ENCODE measurements at regions of chr6 and their contacts with region 1.

Region 1: GRCh38 chr6:108168501-108169463 is 3.0 kb downstream of the NR2E1 start:
- DNase-seq: peak; percentile 49
- ATAC-seq: peak; percentile 45
- H3K4me3 Mint-ChIP-seq: peak overlapping the region; percentile 57
- H3K27ac Mint-ChIP-seq: no peak overlapping the region
- H3K4me1 Mint-ChIP-seq: peaks cover 53% of the 10 kb centered on the region
- H3K27me3 Mint-ChIP-seq: peaks cover 76% of the 10 kb centered on the region
- CTCF ChIP-seq: no peak

Region 2: DNA sequence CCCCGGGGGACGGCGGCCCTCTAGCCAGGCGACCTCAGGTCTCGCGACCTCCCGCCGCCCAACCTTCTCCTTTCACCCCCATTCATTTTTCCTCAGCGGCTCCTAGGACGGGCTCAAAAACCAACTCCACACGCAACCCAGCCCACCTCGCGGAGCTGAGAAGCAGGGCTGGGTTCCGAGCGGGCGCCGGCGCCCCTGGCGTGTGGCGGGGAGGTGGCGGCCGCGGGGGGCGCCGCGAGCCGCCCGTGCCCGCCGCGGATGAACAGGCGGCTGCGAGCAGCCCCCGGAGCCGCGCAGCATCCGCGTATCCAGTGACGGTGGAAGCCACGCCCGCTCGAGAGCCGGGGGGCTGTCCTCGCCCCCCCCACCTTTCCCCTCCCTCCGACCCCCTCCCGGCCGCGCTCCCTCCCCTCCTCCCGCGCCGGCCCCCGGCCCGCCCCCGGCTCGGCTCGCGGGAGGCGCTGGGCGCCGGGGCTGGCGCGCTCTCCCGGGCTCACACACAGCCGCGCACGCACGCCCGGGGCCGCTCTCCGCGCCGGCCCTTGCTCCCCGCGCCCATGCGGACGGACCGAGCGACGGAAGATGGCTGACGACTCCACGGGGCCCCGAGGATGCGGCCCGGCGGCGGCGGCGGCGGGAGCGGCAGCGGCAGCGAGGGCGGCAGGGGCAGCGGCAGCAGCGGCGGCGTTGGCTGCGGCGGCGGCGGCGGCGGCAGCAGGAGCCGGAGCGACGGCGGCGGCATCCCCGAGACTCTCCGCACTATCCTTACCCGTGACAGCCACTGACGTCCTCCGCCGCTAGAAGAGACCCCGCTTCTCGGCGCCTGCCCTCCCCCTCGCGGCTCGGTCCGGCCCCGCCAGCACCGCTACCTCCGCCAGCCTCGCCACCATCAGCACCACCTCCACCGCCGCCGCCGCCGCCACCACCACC is 678.9 kb before region 1 on chr6 and contains the start of gene SOBP:
- CTCF ChIA-PET with region 1: no interaction called
- POLR2A ChIA-PET with region 1: no interaction called
- intact Hi-C with region 1: loop called (anchors 5 kb)
- DNase-seq: peak; percentile 58
- ATAC-seq: peak; percentile 60
- H3K4me3 Mint-ChIP-seq: peak within 1 kb of the TSS; percentile 90
- H3K27ac Mint-ChIP-seq: peak within 1 kb of the TSS; percentile 63
- H3K4me1 Mint-ChIP-seq: peaks cover 26% of the 10 kb centered on the region
- H3K27me3 Mint-ChIP-seq: peaks cover 28% of the 10 kb centered on the region
- CTCF ChIP-seq: no peak
- total RNA-seq, gene SOBP: 1.1 TPM in 2 replicates

Region 3: GRCh38 chr6:108020472-108021116 is 148.2 kb before region 1 on chr6:
- CTCF ChIA-PET with region 1: no interaction called
- POLR2A ChIA-PET with region 1: no interaction called
- intact Hi-C with region 1: no loop called
- DNase-seq: no peak
- ATAC-seq: no peak
- H3K4me3 Mint-ChIP-seq: no peak overlapping the region
- H3K27ac Mint-ChIP-seq: no peak overlapping the region
- H3K4me1 Mint-ChIP-seq: no peaks in the 10 kb centered on the region
- H3K27me3 Mint-ChIP-seq: no peaks in the 10 kb centered on the region
- CTCF ChIP-seq: no peak

Region 4: GRCh38 chr6:108157234-108157980 is 11.4 kb before region 1 on chr6:
- CTCF ChIA-PET with region 1: interaction called, 5 read pairs
- POLR2A ChIA-PET with region 1: interaction called, 4 read pairs
- intact Hi-C with region 1: loop called (anchors 1 kb)
- DNase-seq: peak; percentile 23
- ATAC-seq: no peak
- H3K4me3 Mint-ChIP-seq: peak overlapping the region; percentile 65
- H3K27ac Mint-ChIP-seq: no peak overlapping the region
- H3K4me1 Mint-ChIP-seq: peaks cover 15% of the 10 kb centered on the region
- H3K27me3 Mint-ChIP-seq: peaks cover 77% of the 10 kb centered on the region
- CTCF ChIP-seq: no peak

Region 5: DNA sequence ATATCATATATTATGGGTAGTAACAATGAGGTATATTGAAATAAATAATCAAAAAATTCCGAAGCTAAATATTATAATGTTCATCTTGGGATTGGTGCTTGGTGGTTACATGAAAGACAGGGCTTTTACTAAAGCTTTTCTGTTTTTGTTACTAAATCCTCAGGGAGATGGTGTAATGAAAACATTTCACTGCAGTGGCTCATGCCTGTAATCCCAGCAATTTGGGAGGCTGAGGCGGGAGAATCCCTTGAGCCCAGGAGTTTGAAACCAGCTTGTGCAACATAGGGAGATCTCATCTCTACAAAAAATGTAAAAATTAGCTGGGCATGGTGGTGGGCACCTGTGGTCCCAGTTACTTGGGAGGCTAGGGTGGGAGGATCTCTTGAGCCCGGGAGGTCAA is 168.9 kb after region 1 on chr6:
- CTCF ChIA-PET with region 1: no interaction called
- POLR2A ChIA-PET with region 1: no interaction called
- intact Hi-C with region 1: no loop called
- DNase-seq: no peak
- ATAC-seq: no peak
- H3K4me3 Mint-ChIP-seq: no peak overlapping the region
- H3K27ac Mint-ChIP-seq: no peak overlapping the region
- H3K4me1 Mint-ChIP-seq: peaks cover 19% of the 10 kb centered on the region
- H3K27me3 Mint-ChIP-seq: no peaks in the 10 kb centered on the region
- CTCF ChIP-seq: no peak

Region 6: GRCh38 chr6:108359901-108360882 is 191.4 kb after region 1 on chr6:
- CTCF ChIA-PET with region 1: no interaction called
- POLR2A ChIA-PET with region 1: no interaction called
- intact Hi-C with region 1: loop called (anchors 2 kb)
- DNase-seq: no peak
- ATAC-seq: peak; percentile 62
- H3K4me3 Mint-ChIP-seq: no peak overlapping the region
- H3K27ac Mint-ChIP-seq: no peak overlapping the region
- H3K4me1 Mint-ChIP-seq: peaks cover 7% of the 10 kb centered on the region
- H3K27me3 Mint-ChIP-seq: no peaks in the 10 kb centered on the region
- CTCF ChIP-seq: no peak

Region 7: GRCh38 chr6:108492131-108492766 is 323.5 kb after region 1 on chr6:
- CTCF ChIA-PET with region 1: interaction called, 12 read pairs
- POLR2A ChIA-PET with region 1: no interaction called
- intact Hi-C with region 1: loop called (anchors 5 kb)
- DNase-seq: no peak
- ATAC-seq: peak; percentile 40
- H3K4me3 Mint-ChIP-seq: no peak overlapping the region
- H3K27ac Mint-ChIP-seq: no peak overlapping the region
- H3K4me1 Mint-ChIP-seq: no peaks in the 10 kb centered on the region
- H3K27me3 Mint-ChIP-seq: no peaks in the 10 kb centered on the region
- CTCF ChIP-seq: no peak

Region 8: DNA sequence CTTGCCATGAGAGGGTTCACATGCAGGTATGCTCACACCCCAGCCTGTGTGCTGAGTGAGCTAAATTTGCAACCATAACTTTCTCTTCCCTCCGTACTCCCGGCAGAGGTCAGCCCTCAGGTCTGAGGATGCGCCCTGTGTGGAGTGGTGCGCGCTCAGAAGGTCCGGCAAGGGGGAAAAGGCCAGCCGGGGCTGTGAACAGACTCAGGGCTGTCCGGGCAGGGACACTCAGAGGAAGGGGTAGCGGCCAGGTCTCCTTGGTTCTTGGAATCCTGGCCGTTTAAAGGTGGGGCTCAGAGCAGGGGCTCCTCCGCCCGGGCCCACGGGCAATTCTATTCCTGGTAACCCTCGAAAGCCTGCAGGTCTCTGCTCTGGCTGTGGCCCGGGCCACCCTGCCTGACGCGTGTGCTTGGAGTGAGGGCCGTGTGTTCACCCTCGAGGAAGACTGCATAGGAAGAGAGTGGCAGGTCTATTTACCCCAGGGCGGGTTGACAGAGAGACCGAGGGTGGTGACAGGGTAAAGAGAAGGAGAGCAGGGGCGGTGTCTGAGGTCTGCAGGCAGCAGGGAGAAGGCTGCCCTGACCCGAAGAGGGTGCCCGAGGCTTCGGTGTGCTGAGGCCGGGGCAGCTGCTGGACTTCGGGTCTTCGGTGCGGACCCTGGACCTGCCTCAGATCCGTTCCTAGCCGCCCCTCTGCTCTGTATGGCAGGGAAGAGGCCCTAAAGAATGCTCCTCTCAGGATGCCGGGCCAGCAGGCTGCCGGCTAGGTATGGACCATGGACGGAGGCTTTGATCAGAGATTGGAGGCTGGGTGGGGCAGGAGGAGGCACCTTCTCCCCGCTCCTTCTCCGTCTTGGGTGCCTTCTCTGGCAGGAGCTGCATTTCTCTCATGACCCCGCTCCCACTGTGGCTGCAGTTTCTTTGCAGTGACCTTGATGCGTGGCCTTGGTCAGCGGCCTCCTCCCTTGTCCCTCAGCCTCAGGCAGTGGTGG is 548.3 kb after region 1 on chr6:
- CTCF ChIA-PET with region 1: no interaction called
- POLR2A ChIA-PET with region 1: no interaction called
- intact Hi-C with region 1: no loop called
- DNase-seq: no peak
- ATAC-seq: no peak
- H3K4me3 Mint-ChIP-seq: no peak overlapping the region
- H3K27ac Mint-ChIP-seq: no peak overlapping the region
- H3K4me1 Mint-ChIP-seq: no peaks in the 10 kb centered on the region
- H3K27me3 Mint-ChIP-seq: peaks cover 15% of the 10 kb centered on the region
- CTCF ChIP-seq: no peak

Measured in activated B cell treated with CpG ODN at 0.5 μM for 24 hours (primary cell).